ENCODE measurements at regions of chr16 and their contacts with region 1.

Region 1: GRCh38 chr16:4032768-4033167 is 83.5 kb downstream of the ADCY9 start:
- DNase-seq: no peak
- ATAC-seq: no peak
- H3K4me3 ChIP-seq: no peak overlapping the region
- H3K27ac ChIP-seq: no peak overlapping the region
- H3K4me1 ChIP-seq: no peaks in the 10 kb centered on the region
- H3K27me3 ChIP-seq: no peaks in the 10 kb centered on the region
- CTCF ChIP-seq: no peak

Region 2: DNA sequence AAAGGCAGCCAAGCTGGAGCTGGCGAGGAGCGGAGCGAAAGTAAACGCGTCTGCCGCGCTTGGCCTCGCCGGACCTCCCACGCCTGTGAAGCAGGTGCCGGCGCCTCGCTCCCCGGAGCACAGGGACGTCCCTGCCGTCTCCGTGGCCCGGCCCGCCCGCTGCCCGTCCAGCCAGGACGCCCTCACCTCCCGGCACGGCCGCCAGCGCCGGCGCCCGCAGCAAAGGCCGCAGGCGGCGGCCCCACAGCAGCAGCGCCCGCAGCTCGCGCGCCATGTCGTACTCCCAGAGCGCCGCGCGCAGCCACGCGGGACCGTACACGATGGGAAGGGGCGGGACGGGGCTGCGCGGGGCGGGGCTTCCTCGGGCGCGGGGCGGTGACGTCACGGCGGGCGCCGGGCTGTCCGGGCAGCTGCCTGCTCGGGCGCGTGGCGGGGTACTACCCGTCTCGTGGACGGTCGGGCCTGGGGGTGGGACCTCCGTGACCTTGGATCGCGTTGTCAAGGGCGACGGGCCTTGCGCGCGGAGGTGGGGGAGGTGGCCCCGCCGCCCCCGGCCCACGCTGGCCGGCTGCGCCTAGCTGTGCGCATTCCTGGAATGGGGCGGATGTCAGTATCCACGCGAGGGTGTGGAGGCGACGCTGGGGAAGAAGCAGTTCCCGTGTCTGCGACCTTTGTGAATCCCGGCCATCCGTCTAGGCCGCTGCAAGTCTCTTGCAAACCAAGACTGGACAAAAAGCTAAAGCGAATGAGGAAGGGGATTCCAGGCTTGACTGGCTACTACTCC is 315.3 kb before region 1 on chr16 and contains the start of gene TRAP1:
- CTCF ChIA-PET with region 1: no interaction called
- POLR2A ChIA-PET with region 1: interaction called, 14 read pairs
- in situ Hi-C with region 1: no loop called
- intact Hi-C with region 1: no loop called
- DNase-seq: no peak
- ATAC-seq: peak; percentile 96
- H3K4me3 ChIP-seq: peak within 1 kb of the TSS; percentile 89 to 96
- H3K27ac ChIP-seq: peak within 1 kb of the TSS; percentile 93
- H3K4me1 ChIP-seq: peaks cover 4% of the 10 kb centered on the region
- H3K27me3 ChIP-seq: no peaks in the 10 kb centered on the region
- CTCF ChIP-seq: no peak
- total RNA-seq, gene TRAP1: 137 TPM

Region 3: GRCh38 chr16:3904875-3905274 is 127.9 kb before region 1 on chr16:
- CTCF ChIA-PET with region 1: no interaction called
- POLR2A ChIA-PET with region 1: no interaction called
- in situ Hi-C with region 1: no loop called
- intact Hi-C with region 1: no loop called
- DNase-seq: no peak
- ATAC-seq: no peak
- H3K4me3 ChIP-seq: no peak overlapping the region
- H3K27ac ChIP-seq: no peak overlapping the region
- H3K4me1 ChIP-seq: no peaks in the 10 kb centered on the region
- H3K27me3 ChIP-seq: no peaks in the 10 kb centered on the region
- CTCF ChIP-seq: no peak